CD8-positive, alpha-beta T cell (primary cell): ENCODE measurements at regions of chr16 and their contacts with region 1.

Region 1: DNA sequence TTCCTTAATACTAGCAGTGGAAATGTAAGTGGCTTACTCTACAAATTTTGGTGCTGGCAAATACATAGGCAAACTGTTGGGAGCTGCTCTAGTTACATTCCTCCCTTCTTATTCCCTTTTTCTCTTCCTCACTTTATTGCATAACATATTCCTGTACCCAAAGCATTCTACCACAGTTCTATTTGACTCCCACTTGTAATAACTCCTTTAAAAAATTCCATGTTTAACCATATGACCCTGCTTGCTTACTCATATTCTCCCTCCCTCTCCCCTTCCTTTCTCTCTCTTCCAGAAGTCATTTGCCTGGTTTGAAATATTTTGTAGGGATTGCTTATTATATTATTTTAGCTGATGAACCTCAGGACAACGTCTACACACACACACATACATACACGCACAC is 22.7 kb downstream of the NQO1 start:
- DNase-seq: no peak
- ATAC-seq: no peak
- H3K4me3 ChIP-seq: no peak overlapping the region
- H3K4me3 Mint-ChIP-seq: no peak overlapping the region
- H3K27ac ChIP-seq: no peak overlapping the region
- H3K27ac Mint-ChIP-seq: no peak overlapping the region
- H3K4me1 ChIP-seq: no peaks in the 10 kb centered on the region
- H3K4me1 Mint-ChIP-seq: no peaks in the 10 kb centered on the region
- H3K27me3 ChIP-seq: no peaks in the 10 kb centered on the region
- H3K27me3 Mint-ChIP-seq: no peaks in the 10 kb centered on the region
- CTCF ChIP-seq: no peak

Region 2: GRCh38 chr16:69669577-69669976 is 34.1 kb before region 1 on chr16:
- CTCF ChIA-PET with region 1: no interaction called
- POLR2A ChIA-PET with region 1: no interaction called
- intact Hi-C with region 1: no loop called
- DNase-seq: no peak
- ATAC-seq: no peak
- H3K4me3 ChIP-seq: no peak overlapping the region
- H3K4me3 Mint-ChIP-seq: no peak overlapping the region
- H3K27ac ChIP-seq: no peak overlapping the region
- H3K27ac Mint-ChIP-seq: no peak overlapping the region
- H3K4me1 ChIP-seq: no peaks in the 10 kb centered on the region
- H3K4me1 Mint-ChIP-seq: no peaks in the 10 kb centered on the region
- H3K27me3 ChIP-seq: no peaks in the 10 kb centered on the region
- H3K27me3 Mint-ChIP-seq: no peaks in the 10 kb centered on the region
- CTCF ChIP-seq: no peak

Region 3: GRCh38 chr16:69754469-69755310 is 51.1 kb after region 1 on chr16 and contains the start of gene NOB1:
- CTCF ChIA-PET with region 1: interaction called, 88 read pairs
- POLR2A ChIA-PET with region 1: interaction called, 17 read pairs
- intact Hi-C with region 1: no loop called
- DNase-seq: peak; percentile 94 to 100 (median 98)
- ATAC-seq: peak; percentile 97
- H3K4me3 ChIP-seq: peak within 1 kb of the TSS; percentile 91 to 100
- H3K4me3 Mint-ChIP-seq: peak within 1 kb of the TSS; percentile 100
- H3K27ac ChIP-seq: peak within 1 kb of the TSS; percentile 78 to 84
- H3K27ac Mint-ChIP-seq: peak within 1 kb of the TSS; percentile 98
- H3K4me1 ChIP-seq: peaks cover 9% of the 10 kb centered on the region
- H3K4me1 Mint-ChIP-seq: peaks cover 29% of the 10 kb centered on the region
- H3K27me3 ChIP-seq: no peaks in the 10 kb centered on the region
- H3K27me3 Mint-ChIP-seq: no peaks in the 10 kb centered on the region
- CTCF ChIP-seq: peak; percentile 79
- total RNA-seq, gene NOB1: 46.4 to 48.0 TPM